ENCODE measurements at regions of chr2 and their contacts with region 1.

Region 1: GRCh38 chr2:121649596-121650314 is 493 bp upstream of the CLASP1 start:
- DNase-seq: peak; percentile 83
- ATAC-seq: peak; percentile 94
- H3K4me3 Mint-ChIP-seq: peak overlapping the region; percentile 96
- H3K27ac Mint-ChIP-seq: peak overlapping the region; percentile 99
- H3K4me1 Mint-ChIP-seq: peaks cover 46% of the 10 kb centered on the region
- H3K27me3 Mint-ChIP-seq: no peaks in the 10 kb centered on the region

Region 2: DNA sequence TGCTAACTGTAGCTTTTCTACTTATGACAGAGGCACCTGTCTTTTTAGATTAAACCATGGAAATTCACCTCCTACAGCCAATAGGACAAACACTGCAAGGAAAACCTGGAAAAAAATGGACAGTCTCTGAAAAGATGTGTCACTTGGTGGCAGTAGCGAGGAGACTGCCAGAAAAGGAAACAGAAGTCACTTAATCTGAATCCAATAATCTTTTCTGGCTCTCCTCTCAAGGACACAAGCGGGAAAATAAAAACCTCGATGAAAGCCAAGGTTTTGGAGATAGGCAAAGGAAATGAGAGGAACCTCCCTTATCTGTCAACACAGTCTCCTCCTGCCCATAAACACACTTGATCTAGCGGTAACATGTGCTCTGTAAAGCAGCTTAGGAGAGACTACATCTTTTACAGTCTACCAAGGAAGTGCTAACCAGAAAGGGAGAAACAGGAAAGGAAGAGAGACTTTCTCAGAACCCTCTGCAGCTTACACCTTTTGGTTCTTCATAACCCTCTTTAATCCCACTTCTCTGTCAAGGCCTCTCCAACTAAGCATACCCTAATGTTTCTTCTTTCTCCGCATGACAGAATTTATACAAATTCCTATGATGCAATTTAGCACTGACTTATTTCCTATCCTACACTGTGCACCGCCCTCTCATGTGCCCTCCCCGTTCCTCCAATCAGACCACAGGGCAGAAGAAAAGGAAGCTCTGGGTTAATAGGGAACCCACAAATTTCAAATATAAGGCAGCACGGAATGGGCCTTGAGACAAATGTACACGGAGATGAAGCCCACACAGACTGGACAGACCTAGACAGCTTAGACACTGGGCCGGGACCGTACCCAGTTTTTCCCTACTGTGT is 53.3 kb before region 1 on chr2:
- POLR2A ChIA-PET with region 1: interaction called, 15 read pairs
- DNase-seq: no peak
- ATAC-seq: peak; percentile 85
- H3K4me3 Mint-ChIP-seq: peak overlapping the region; percentile 76
- H3K27ac Mint-ChIP-seq: peak overlapping the region; percentile 85
- H3K4me1 Mint-ChIP-seq: peaks cover 35% of the 10 kb centered on the region
- H3K27me3 Mint-ChIP-seq: no peaks in the 10 kb centered on the region

Region 3: GRCh38 chr2:121699421-121700333 is 49.9 kb after region 1 on chr2:
- POLR2A ChIA-PET with region 1: interaction called, 74 read pairs
- DNase-seq: peak; percentile 86
- ATAC-seq: peak; percentile 98
- H3K4me3 Mint-ChIP-seq: peak overlapping the region; percentile 95
- H3K27ac Mint-ChIP-seq: peak overlapping the region; percentile 99
- H3K4me1 Mint-ChIP-seq: peaks cover 47% of the 10 kb centered on the region
- H3K27me3 Mint-ChIP-seq: no peaks in the 10 kb centered on the region